ENCODE measurements at regions of chr4 and their contacts with region 1.

Region 1: DNA sequence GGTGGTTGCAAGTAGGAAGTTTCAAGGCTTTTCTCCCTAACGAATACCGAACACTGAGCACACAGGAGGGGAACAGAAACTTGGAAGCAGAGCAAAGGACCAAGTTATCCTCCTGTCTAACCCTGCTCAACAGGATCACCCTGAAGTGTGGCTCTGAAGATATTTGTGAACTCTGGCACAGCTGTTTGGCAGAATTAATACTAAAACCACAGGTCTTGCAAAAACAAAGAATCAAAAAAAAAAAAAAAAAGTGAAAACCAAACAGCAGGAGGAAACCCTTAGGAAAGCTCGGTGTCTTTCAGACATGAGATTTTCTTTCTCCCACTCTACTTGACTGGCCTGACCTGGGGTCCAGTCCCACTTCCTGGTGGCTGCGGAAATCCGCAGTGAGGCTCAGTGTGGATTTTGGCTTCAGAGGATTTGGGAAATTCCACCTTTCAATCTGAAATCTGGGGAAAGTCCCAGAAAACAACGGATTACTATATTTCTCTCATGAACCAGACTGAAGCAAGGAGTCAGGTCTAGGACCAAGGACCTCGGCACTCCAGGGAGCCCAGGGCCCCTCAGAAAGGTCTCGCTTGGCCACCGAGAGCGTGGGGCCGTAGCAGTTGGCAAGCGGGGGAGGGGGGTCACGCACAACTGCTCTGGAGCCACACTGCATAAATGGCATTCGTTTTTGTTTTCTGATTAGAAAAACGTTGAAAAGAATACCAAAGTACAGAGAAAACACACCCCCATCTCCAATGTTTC is 867 bp downstream of the TIFA start:
- DNase-seq: peak in 3 of 5 donors; percentile 15 to 22 (median 15)
- H3K4me3 ChIP-seq: peak overlapping the region; percentile 88 to 94
- H3K4me3 Mint-ChIP-seq: peak overlapping the region; percentile 92 to 98 (median 96)
- H3K27ac ChIP-seq: peak overlapping the region; percentile 79
- H3K27ac Mint-ChIP-seq: peak overlapping the region; percentile 91 to 99 (median 94)
- H3K4me1 ChIP-seq: peaks cover 85% of the 10 kb centered on the region
- H3K4me1 Mint-ChIP-seq: peaks cover 58 to 96% (median 75%) of the 10 kb centered on the region in 4 donors
- H3K27me3 ChIP-seq: no peaks in the 10 kb centered on the region
- H3K27me3 Mint-ChIP-seq: no peaks in the 10 kb centered on the region

Region 2: GRCh38 chr4:112231779-112232713 is 52.8 kb before region 1 on chr4 and contains the start of gene AP1AR:
- CTCF ChIA-PET with region 1: interaction called, 4 read pairs
- POLR2A ChIA-PET with region 1: interaction called, 48 read pairs
- intact Hi-C with region 1: loop called (anchors 1 kb)
- DNase-seq: peak; percentile 77 to 86 (median 79)
- H3K4me3 ChIP-seq: peak within 1 kb of the TSS; percentile 84 to 90
- H3K4me3 Mint-ChIP-seq: peak within 1 kb of the TSS; percentile 93 to 99 (median 96)
- H3K27ac ChIP-seq: peak within 1 kb of the TSS; percentile 92
- H3K27ac Mint-ChIP-seq: peak within 1 kb of the TSS; percentile 98 to 100 (median 100)
- H3K4me1 ChIP-seq: peaks cover 40% of the 10 kb centered on the region
- H3K4me1 Mint-ChIP-seq: peaks cover 18 to 45% (median 26%) of the 10 kb centered on the region in 4 donors
- H3K27me3 ChIP-seq: no peaks in the 10 kb centered on the region
- H3K27me3 Mint-ChIP-seq: no peaks in the 10 kb centered on the region
- total RNA-seq, gene AP1AR: 20.3 to 22.8 TPM

Region 3: GRCh38 chr4:112266821-112267220 is 18.0 kb before region 1 on chr4:
- CTCF ChIA-PET with region 1: interaction called, 20 read pairs
- POLR2A ChIA-PET with region 1: interaction called, 6 read pairs
- intact Hi-C with region 1: loop called (anchors 2 kb)
- DNase-seq: peak in 1 of 5 donors; percentile 8
- H3K4me3 ChIP-seq: no peak overlapping the region
- H3K4me3 Mint-ChIP-seq: no peak overlapping the region
- H3K27ac ChIP-seq: no peak overlapping the region
- H3K27ac Mint-ChIP-seq: no peak overlapping the region
- H3K4me1 ChIP-seq: no peaks in the 10 kb centered on the region
- H3K4me1 Mint-ChIP-seq: peaks cover 4 to 12% (median 7%) of the 10 kb centered on the region in 4 donors
- H3K27me3 ChIP-seq: no peaks in the 10 kb centered on the region
- H3K27me3 Mint-ChIP-seq: no peaks in the 10 kb centered on the region

Region 4: GRCh38 chr4:112296949-112297880 is 12.4 kb after region 1 on chr4 and contains the start of gene ALPK1:
- CTCF ChIA-PET with region 1: interaction called, 42 read pairs
- POLR2A ChIA-PET with region 1: interaction called, 125 read pairs
- intact Hi-C with region 1: loop called (anchors 1 kb)
- DNase-seq: peak in 3 of 5 donors; percentile 12 to 48 (median 33)
- H3K4me3 ChIP-seq: peak within 1 kb of the TSS; percentile 13 to 30
- H3K4me3 Mint-ChIP-seq: peak within 1 kb of the TSS; percentile 79 to 90 (median 84)
- H3K27ac ChIP-seq: peak within 1 kb of the TSS; percentile 36
- H3K27ac Mint-ChIP-seq: peak within 1 kb of the TSS; percentile 80 to 94 (median 90)
- H3K4me1 ChIP-seq: peaks cover 45% of the 10 kb centered on the region
- H3K4me1 Mint-ChIP-seq: peaks cover 16 to 29% (median 22%) of the 10 kb centered on the region in 4 donors
- H3K27me3 ChIP-seq: no peaks in the 10 kb centered on the region
- H3K27me3 Mint-ChIP-seq: no peaks in the 10 kb centered on the region
- total RNA-seq, gene ALPK1: 16.3 to 18.6 TPM

Region 5: DNA sequence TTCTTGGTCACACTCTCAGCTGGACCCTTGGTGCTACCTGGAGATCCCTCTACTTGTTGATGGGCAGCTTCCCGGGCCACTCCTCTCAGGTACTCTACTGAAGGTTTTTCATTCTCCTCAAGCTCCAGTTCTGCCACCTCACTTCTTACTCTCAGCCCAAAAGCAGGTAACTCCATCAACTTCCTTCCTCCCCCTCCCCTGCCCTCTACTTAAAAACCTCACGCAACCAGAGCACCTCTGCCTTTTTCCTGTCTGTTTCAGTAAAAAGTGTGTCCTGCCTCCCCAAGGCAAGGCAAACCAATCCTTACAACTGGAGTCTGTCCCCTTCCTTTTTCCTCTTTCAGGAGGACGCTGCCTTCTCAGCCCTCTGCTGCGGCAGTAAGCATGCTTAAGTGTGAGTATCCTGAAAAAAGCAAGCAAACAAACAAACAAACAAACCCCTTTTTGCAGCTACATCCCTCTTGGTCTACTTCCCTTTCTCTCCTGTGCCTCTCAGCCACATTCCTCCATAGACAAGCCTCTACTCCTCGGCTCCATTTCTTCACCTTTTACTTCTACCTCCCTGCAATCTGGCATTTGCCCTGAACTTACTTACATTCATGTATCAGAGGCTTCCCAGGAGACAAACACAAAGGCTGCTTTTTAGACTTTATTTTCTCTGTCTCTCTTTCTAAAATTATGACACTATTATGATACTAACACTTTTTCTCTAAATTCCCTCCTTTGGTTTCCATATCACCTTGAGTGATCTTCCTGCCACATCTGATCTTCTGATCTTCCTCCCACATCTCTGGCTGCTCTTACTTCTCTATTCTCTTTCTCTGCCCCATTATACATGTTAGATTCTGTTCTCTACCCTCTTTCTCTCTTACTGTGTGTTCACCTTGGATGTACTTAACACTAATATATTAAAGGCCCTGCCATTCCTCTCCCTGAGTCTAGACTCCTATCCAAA is 17.8 kb after region 1 on chr4:
- CTCF ChIA-PET with region 1: interaction called, 42 read pairs
- POLR2A ChIA-PET with region 1: interaction called, 125 read pairs
- intact Hi-C with region 1: loop called (anchors 1 kb)
- DNase-seq: peak in 3 of 5 donors; percentile 30 to 40 (median 33)
- H3K4me3 ChIP-seq: peak overlapping the region in 1 of 2 donors; percentile 6
- H3K4me3 Mint-ChIP-seq: no peak overlapping the region
- H3K27ac ChIP-seq: peak overlapping the region; percentile 45
- H3K27ac Mint-ChIP-seq: no peak overlapping the region
- H3K4me1 ChIP-seq: peaks cover 46% of the 10 kb centered on the region
- H3K4me1 Mint-ChIP-seq: peaks cover 14 to 27% (median 18%) of the 10 kb centered on the region in 4 donors
- H3K27me3 ChIP-seq: no peaks in the 10 kb centered on the region
- H3K27me3 Mint-ChIP-seq: no peaks in the 10 kb centered on the region

Region 6: DNA sequence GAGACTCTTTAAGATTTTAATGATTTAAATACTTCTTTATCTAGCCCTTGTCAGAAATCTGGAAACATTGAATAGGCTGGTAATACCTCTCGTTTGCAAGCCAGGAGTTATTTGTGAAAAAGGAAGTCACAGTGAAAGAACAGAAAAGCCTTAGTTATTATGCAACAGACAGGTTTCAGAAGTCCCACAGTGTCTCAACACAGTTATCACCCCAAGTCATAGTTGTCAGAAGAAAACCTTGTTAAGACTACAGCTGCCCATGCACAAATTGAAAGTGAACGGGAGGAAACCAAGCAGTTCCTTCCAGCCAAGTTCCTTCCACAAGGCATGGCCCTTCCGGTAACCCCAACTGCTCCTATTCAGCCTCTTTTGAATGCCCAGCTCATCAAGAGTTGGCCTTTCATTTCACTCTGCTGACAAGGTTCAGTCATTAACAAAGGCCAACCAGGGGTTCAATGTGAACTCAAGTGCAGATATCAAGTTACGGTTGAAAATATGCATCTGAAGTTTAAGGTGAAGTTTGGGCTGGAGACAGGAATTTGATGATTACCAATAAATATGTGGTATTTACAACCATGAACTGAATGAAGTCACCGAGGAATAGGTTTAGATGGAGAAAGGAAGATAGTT is 27.9 kb after region 1 on chr4:
- CTCF ChIA-PET with region 1: interaction called, 6 read pairs
- POLR2A ChIA-PET with region 1: interaction called, 10 read pairs
- intact Hi-C with region 1: no loop called
- DNase-seq: no peak
- H3K4me3 ChIP-seq: no peak overlapping the region
- H3K4me3 Mint-ChIP-seq: peak overlapping the region in 1 of 8 donors; percentile 7
- H3K27ac ChIP-seq: no peak overlapping the region
- H3K27ac Mint-ChIP-seq: no peak overlapping the region
- H3K4me1 ChIP-seq: peaks cover 6% of the 10 kb centered on the region
- H3K4me1 Mint-ChIP-seq: peaks cover 0 to 19% (median 5%) of the 10 kb centered on the region in 4 donors
- H3K27me3 ChIP-seq: no peaks in the 10 kb centered on the region
- H3K27me3 Mint-ChIP-seq: no peaks in the 10 kb centered on the region

Region 7: DNA sequence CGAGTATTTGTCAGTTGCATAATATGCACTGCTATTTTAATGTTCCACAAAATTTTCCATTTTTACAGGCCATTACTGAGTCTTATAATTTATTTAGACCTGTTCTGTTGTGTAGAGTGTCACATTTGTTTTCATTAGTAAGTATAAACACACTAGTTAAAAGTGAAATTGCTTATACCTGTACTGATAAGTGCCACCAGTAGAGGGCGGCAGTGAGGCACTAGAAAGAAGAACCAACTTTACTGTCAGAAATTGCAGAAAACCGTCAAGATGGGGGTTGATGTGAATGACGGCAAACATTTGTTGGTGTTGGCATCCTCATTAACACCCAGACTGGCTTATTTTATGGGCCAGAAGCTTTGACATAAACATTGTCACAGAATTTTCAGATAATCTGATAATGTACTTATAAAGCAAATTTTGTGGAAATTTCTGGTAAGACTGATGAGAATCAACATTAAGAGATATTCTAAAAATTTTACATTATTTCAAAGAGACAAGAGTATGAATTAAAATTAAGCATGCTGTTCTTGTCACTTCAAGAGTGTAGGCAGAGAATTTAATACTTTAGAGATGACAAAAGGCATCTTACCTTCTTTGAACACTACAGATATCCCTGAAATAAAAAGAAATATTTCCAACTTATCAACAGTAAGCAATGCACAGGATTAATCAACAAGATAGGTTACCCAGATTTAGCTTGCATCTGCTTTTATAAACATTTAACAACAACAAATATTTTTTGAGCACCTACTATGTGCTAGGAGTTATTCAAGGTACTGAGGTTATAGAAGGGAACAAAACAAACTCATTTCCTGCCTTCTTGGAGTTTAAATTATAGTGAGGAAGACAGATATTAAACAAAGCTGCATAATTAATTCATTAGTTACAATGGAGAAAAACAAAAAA is 37.2 kb after region 1 on chr4:
- CTCF ChIA-PET with region 1: interaction called, 39 read pairs
- POLR2A ChIA-PET with region 1: interaction called, 16 read pairs
- intact Hi-C with region 1: loop called (anchors 1 kb)
- DNase-seq: peak; percentile 71 to 80 (median 73)
- H3K4me3 ChIP-seq: no peak overlapping the region
- H3K4me3 Mint-ChIP-seq: peak overlapping the region in 7 of 8 donors; percentile 33 to 73 (median 51)
- H3K27ac ChIP-seq: no peak overlapping the region
- H3K27ac Mint-ChIP-seq: peak overlapping the region in 2 of 7 donors; percentile 46 to 77
- H3K4me1 ChIP-seq: peaks cover 8% of the 10 kb centered on the region
- H3K4me1 Mint-ChIP-seq: peaks cover 5 to 15% (median 8%) of the 10 kb centered on the region in 4 donors
- H3K27me3 ChIP-seq: no peaks in the 10 kb centered on the region
- H3K27me3 Mint-ChIP-seq: no peaks in the 10 kb centered on the region

Measured in CD4-positive, alpha-beta memory T cell (primary cell).